ENCODE measurements at regions of chr11 and their contacts with region 1.

Region 1: DNA sequence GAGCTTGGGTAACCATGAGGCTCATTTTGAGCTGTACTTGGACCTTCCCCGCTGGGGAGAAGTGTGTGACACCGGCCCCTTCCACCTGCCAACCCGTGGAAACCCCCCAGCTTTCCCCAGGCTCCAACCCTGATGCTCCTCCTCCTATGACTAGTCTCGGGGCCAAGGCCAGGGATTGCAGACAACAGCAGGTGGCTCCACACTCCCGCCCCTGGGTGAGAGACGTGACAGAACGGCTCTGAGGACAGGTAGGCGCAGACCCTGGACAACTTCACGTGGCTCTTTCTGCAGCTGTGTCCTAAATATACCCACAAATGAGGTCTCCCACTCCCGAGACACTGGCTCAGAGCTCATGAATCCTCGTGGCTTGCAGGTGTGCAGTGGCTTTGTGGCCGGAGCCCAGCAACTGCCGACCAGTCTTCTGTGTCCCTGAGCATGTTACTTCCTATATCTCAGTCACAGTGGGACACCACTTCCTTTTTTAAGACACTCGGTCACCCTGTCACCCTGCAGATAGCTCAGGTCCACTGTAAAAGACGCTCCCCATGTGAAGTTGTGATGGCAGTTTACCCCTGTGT is 55.2 kb downstream of the NECTIN1 start:
- DNase-seq: peak; percentile 14
- H3K4me3 Mint-ChIP-seq: no peak overlapping the region
- H3K27ac Mint-ChIP-seq: no peak overlapping the region
- H3K4me1 Mint-ChIP-seq: peaks cover 8% of the 10 kb centered on the region
- H3K27me3 Mint-ChIP-seq: no peaks in the 10 kb centered on the region

Region 2: GRCh38 chr11:119057000-119057769 is 616.7 kb before region 1 on chr11 and contains the start of gene HYOU1:
- intact Hi-C with region 1: no loop called
- DNase-seq: peak; percentile 97
- H3K4me3 Mint-ChIP-seq: peak within 1 kb of the TSS; percentile 98
- H3K27ac Mint-ChIP-seq: peak within 1 kb of the TSS; percentile 99
- H3K4me1 Mint-ChIP-seq: peaks cover 28% of the 10 kb centered on the region
- H3K27me3 Mint-ChIP-seq: no peaks in the 10 kb centered on the region
- total RNA-seq, gene HYOU1: 215 and 226 TPM in 2 replicates

Region 3: DNA sequence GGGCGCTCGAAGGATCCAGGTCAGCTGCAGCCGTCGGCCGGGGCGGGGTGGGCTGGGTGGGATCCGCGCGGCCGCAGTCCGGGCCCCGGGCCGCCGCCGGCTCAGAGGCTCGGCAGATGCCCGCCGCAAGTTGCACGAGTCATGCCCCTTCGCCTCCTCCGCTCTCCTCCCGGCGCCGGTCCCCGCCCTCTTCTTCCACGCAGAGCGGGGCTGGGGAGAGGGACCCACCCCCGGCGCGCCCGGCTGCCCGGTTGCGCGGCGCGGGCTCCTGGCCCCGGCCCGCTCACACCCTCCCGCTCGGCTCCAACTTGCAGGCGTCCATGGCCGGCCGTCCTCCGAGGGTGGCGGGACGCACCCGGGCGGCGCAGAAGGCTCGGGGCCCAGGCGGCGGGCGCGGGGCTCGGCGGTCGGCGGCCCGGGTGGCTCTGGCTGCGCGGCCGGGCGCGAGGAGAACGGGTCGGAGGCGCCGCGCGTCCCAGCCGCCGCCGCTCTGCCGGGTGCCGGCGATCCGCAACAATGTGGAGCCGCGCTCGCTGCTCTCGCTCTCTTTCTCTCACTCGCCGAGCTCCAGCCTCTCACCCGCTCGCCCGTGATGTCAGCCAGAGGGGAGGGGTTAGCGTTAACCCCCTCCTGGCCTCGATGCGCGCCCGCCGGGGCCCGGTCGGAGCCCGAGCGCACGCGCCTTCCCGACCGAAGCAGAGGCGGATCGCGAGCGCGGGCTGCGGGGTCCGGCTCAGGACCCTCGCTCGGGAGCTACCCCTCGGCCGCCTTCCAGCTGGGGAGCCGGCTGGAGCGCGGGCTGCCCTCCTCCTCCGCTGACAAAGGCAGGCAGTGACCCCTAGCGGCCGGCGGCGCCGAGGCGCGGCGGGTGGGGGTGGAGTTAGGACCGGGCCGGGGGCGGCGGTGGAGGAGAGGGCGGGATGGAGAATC is 55.1 kb after region 1 on chr11 and contains the start of gene NECTIN1:
- intact Hi-C with region 1: loop called (anchors 2 kb)
- DNase-seq: peak; percentile 78
- H3K4me3 Mint-ChIP-seq: peak within 1 kb of the TSS; percentile 78
- H3K27ac Mint-ChIP-seq: peak within 1 kb of the TSS; percentile 44
- H3K4me1 Mint-ChIP-seq: peaks cover 7% of the 10 kb centered on the region
- H3K27me3 Mint-ChIP-seq: peaks cover 66% of the 10 kb centered on the region
- total RNA-seq, gene NECTIN1: 5.0 and 5.6 TPM in 2 replicates

Region 4: GRCh38 chr11:119741369-119742262 is 67.8 kb after region 1 on chr11:
- intact Hi-C with region 1: no loop called
- DNase-seq: peak; percentile 33
- H3K4me3 Mint-ChIP-seq: no peak overlapping the region
- H3K27ac Mint-ChIP-seq: no peak overlapping the region
- H3K4me1 Mint-ChIP-seq: peaks cover 3% of the 10 kb centered on the region
- H3K27me3 Mint-ChIP-seq: peaks cover 49% of the 10 kb centered on the region